Transverse colon (tissue), 4 donors: ENCODE measurements at regions of chr14 and their contacts with region 1.

Region 1: GRCh38 chr14:54329082-54329695 is 67.6 kb upstream of the CDKN3 start:
- DNase-seq: peak; percentile 34
- H3K4me3 ChIP-seq: no peak overlapping the region
- H3K27ac ChIP-seq: no peak overlapping the region
- H3K4me1 ChIP-seq: peaks cover 0 to 29% (median 7%) of the 10 kb centered on the region in 4 donors
- H3K27me3 ChIP-seq: no peaks in the 10 kb centered on the region
- CTCF ChIP-seq: peak; percentile 58 to 68 (median 62)
- EP300 ChIP-seq: no peak
- POLR2A ChIP-seq: no peak

Region 2: GRCh38 chr14:53295985-53296582 is 1033.1 kb before region 1 on chr14:
- in situ Hi-C with region 1: loop called in 1 of 4 experiments (anchors 25 kb)
- intact Hi-C with region 1: no loop called
- DNase-seq: no peak
- H3K4me3 ChIP-seq: no peak overlapping the region
- H3K27ac ChIP-seq: no peak overlapping the region
- H3K4me1 ChIP-seq: no peaks in the 10 kb centered on the region
- H3K27me3 ChIP-seq: no peaks in the 10 kb centered on the region
- CTCF ChIP-seq: peak; percentile 53 to 79 (median 69)
- EP300 ChIP-seq: no peak
- POLR2A ChIP-seq: no peak

Region 3: DNA sequence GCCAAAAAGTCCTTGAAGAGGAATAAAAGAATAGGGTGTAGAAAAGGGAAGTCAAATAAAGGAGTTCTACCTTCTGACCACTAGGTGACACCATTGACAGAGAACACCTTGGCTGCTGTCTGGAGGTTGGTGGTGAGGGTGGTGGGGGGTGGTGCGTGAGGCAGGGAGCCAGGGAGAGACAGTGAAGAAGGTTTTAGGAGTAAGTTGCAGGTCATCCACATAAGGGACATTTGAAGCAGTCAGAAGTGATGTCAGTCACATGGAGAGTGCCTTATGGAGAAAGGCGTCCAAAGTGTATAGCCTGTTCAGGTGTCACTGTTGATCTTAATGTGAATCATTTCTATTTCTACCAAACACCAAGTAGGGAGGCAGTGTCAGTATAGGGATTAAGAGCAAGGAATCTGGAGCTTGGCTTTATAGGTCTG is 896.8 kb before region 1 on chr14:
- in situ Hi-C with region 1: loop called in 1 of 4 experiments (anchors 25 kb)
- intact Hi-C with region 1: no loop called
- DNase-seq: no peak
- H3K4me3 ChIP-seq: no peak overlapping the region
- H3K27ac ChIP-seq: no peak overlapping the region
- H3K4me1 ChIP-seq: peaks cover 0 to 5% (median 0%) of the 10 kb centered on the region in 4 donors
- H3K27me3 ChIP-seq: no peaks in the 10 kb centered on the region
- CTCF ChIP-seq: peak; percentile 47 to 65 (median 58)
- EP300 ChIP-seq: no peak
- POLR2A ChIP-seq: no peak

Region 4: DNA sequence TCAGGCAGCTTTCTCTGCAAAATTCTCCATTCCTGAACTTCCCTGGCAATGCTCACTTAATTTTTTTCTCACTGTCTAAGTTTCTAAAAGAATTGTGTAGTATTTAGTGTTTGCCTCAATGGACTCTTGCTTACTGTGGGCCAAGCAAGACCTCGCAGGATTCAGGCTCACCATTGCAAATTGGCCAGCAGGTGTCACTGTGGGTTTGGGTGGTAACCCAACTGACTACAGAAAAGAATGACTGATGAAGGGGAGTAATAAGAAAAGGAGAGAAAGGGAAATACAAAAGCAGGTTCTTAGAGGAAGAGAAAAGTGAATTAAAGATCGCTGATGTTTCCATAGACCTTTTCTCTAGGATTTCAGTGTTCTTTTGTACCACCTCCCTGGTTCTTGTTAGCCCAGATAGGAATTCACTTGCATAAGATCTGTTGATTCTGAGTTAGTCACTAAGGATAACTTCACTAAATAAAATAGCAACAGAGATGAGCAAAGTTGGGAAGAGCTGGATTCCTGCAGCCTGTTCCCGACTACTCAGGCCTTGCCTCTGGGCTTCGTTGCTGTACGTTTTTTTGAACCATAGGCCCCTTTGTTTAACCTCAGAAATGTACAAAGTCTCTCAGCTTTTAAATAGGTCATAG is 789.6 kb before region 1 on chr14:
- in situ Hi-C with region 1: loop called (anchors 10 to 25 kb)
- intact Hi-C with region 1: loop called (anchors 10 kb)
- DNase-seq: peak; percentile 78
- H3K4me3 ChIP-seq: no peak overlapping the region
- H3K27ac ChIP-seq: peak overlapping the region; percentile 53 to 77 (median 57)
- H3K4me1 ChIP-seq: peaks cover 0 to 38% (median 7%) of the 10 kb centered on the region in 4 donors
- H3K27me3 ChIP-seq: no peaks in the 10 kb centered on the region
- CTCF ChIP-seq: peak; percentile 81 to 88 (median 86)
- EP300 ChIP-seq: no peak
- POLR2A ChIP-seq: no peak

Region 5: GRCh38 chr14:53953002-53953827 is 376.0 kb before region 1 on chr14:
- in situ Hi-C with region 1: loop called in 1 of 4 experiments (anchors 25 kb)
- intact Hi-C with region 1: no loop called
- DNase-seq: peak; percentile 78
- H3K4me3 ChIP-seq: peak overlapping the region; percentile 54 to 71 (median 57)
- H3K27ac ChIP-seq: peak overlapping the region; percentile 80 to 89 (median 83)
- H3K4me1 ChIP-seq: peaks cover 4 to 43% (median 34%) of the 10 kb centered on the region in 4 donors
- H3K27me3 ChIP-seq: peaks cover 42% of the 10 kb centered on the region
- CTCF ChIP-seq: no peak
- EP300 ChIP-seq: no peak
- POLR2A ChIP-seq: peak; percentile 61

Region 6: DNA sequence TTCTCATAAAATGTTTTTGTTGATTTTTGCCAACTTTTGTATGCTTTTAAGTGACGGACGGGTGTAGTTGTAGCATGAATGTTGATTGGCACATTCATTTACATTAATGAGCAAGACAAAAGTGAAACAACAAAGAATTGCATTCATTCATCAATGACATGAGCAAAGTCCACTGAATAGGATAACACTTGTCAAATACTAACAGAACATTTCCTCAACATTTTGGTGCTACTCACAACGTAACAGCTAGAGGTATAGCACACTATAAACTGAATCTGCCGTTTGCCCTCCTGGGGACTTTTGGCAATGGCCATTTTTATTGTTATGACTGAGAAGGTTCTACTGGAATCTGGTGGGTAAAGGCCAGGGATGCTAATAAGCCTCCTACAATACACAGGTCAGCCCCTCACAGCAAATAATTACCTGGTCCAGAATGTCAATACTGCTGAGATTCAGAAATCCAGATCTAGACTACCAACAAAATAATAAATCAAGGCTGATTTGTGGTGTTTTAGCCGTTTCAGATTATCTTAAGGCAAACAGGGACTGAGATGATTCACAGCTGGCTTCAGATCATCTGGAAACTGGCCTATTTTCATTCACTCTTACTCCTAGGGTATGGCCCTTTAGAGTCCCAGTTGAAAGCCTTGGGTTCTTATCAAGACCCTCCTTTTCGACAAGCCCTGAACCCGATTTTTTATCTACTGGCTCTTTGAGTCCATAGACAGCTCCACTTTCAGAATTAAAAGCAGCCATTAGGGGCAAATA is 45.1 kb after region 1 on chr14:
- in situ Hi-C with region 1: no loop called
- intact Hi-C with region 1: no loop called
- DNase-seq: no peak
- H3K4me3 ChIP-seq: no peak overlapping the region
- H3K27ac ChIP-seq: no peak overlapping the region
- H3K4me1 ChIP-seq: no peaks in the 10 kb centered on the region
- H3K27me3 ChIP-seq: no peaks in the 10 kb centered on the region
- CTCF ChIP-seq: no peak
- EP300 ChIP-seq: no peak
- POLR2A ChIP-seq: no peak